Right cardiac atrium (tissue), 5 donors: ENCODE measurements at regions of chr2 and their contacts with region 1.

Region 1: DNA sequence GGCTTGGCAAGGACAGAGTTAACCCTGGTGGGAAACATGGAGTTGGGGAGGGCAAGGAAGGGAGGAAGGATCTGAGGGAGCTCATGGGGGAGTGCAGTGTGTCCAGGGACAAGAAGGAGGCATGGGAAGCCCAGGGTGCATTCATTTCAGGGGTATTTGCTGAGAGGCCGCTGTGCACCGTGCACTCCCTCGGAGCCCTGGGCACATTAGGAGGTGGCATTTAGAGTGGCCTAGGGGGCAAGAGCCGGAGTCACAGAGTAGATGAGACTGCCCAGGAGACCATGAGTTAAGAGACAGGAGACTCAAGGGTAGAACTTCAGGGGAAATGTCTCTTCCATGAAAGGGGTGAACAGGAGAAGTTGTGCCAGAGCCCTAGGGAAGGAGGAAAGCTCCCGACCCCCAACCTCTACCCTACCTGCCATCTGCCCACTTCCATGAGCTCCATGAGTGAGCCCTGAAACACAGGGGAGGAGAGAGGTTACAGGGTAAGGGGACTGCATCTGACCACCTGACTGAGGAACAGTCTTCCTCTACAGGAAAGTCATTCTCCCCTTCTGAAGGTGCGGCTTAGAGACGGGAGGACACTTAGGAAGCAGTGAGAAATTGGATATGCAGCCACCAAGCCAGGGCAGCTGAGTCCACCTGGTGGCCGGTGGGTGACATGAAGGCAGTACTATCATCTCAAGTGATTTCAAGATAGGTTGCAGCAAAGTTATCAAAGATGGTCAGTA is 58.5 kb upstream of the COPS8 start:
- DNase-seq: peak; percentile 75 to 89 (median 84)
- ATAC-seq: peak; percentile 77 to 93
- H3K4me3 ChIP-seq: no peak overlapping the region
- H3K27ac ChIP-seq: no peak overlapping the region
- H3K4me1 ChIP-seq: no peaks in the 10 kb centered on the region
- H3K27me3 ChIP-seq: no peaks in the 10 kb centered on the region

Region 2: DNA sequence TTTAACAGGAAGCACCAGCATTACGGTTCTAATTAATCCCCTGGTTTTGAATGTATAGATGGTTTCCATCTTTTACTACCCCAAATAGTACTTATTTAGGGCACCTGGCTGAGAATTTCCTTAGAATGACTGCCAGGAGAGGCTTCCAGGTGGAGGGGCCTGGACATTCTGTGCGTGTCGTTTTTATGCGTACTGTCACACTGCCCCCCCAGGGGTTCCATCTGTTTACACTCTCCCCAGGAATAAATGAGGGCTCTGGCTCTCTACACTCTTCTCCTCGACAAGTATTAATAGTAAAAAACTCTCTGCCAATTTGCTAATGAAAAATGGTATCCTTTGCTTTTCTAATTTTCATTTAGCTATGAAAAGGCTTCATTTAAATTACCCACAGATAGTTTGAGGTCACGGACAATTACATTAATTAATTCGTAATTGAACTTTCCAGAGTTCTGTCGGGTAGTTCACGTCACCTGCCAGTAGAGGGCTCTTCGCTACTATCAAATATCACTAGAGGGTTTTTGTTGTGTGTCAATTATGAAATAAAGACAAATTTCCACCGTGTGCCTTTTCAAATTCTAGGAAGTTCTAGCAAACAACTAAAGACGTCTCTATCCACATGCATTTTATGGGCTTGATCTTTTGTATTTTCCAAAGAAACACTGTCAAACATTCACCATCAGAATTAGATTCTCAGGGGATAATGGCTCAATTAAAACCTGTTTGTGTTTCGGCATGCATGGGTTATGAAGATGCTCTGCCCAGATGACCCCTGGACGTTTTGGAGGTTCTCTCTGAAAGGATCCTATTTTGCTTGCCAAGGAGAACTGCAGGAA is 674.2 kb before region 1 on chr2:
- intact Hi-C with region 1: loop called in 2 of 4 experiments (anchors 2 to 10 kb)
- DNase-seq: no peak
- ATAC-seq: peak in 1 of 2 donors; percentile 32
- H3K4me3 ChIP-seq: no peak overlapping the region
- H3K27ac ChIP-seq: no peak overlapping the region
- H3K4me1 ChIP-seq: no peaks in the 10 kb centered on the region
- H3K27me3 ChIP-seq: no peaks in the 10 kb centered on the region

Region 3: DNA sequence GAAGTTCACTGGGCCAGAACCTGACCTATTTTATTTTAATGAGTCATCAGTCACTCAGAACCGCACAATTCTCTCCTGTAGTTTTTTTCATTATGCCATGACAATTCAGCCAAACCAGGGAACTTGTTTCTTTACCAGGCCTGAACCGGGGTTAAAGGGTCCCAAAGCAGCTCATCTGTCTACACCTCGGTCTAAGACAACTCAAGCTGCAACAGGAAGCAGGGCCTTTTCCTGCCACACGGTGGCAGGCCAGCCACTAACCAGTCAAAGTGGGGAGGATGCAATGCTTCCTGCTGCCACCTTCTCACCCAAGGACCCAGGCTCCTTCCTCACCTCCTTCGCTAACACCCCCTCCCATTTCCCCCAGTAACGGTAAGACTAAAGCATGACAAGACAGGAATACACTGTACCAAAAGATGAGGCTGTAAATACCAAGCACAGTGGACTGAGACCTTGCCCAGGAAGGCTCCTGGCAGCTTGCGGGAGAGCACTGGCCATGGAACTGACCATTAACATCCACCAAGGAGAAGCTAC is 514.2 kb before region 1 on chr2:
- intact Hi-C with region 1: loop called (anchors 5 to 10 kb)
- DNase-seq: peak; percentile 64 to 89 (median 80)
- ATAC-seq: peak; percentile 86 to 95
- H3K4me3 ChIP-seq: no peak overlapping the region
- H3K27ac ChIP-seq: no peak overlapping the region
- H3K4me1 ChIP-seq: no peaks in the 10 kb centered on the region
- H3K27me3 ChIP-seq: no peaks in the 10 kb centered on the region

Region 4: GRCh38 chr2:236562434-236562833 is 464.7 kb before region 1 on chr2:
- intact Hi-C with region 1: loop called in 1 of 4 experiments (anchors 5 kb)
- DNase-seq: no peak
- ATAC-seq: no peak
- H3K4me3 ChIP-seq: no peak overlapping the region
- H3K27ac ChIP-seq: no peak overlapping the region
- H3K4me1 ChIP-seq: peaks cover 2% of the 10 kb centered on the region
- H3K27me3 ChIP-seq: no peaks in the 10 kb centered on the region

Region 5: DNA sequence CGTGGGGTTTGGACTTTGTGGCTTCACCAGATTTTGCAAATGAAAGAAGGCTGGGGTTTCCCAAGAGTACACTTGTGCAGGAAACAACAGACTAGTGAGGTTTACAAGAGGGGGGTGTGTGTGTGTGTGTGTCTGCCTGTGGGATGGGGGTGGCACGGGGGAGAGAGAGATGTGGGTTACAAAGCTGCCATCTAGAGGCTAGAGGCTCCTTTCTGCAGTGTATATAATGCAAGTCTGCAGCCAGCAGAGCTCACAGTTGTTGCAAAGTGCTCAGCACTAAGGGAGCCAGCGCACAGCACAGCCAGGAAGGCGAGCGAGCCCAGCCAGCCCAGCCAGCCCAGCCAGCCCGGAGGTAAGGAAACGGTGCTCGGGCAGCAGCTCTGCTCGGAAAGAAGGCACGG is 457.6 kb before region 1 on chr2 and contains the start of gene ACKR3:
- intact Hi-C with region 1: loop called in 2 of 4 experiments (anchors 5 kb)
- DNase-seq: peak; percentile 82 to 91 (median 90)
- ATAC-seq: peak; percentile 81 to 88
- H3K4me3 ChIP-seq: peak within 1 kb of the TSS; percentile 79
- H3K27ac ChIP-seq: peak within 1 kb of the TSS; percentile 97
- H3K4me1 ChIP-seq: peaks cover 2% of the 10 kb centered on the region
- H3K27me3 ChIP-seq: no peaks in the 10 kb centered on the region
- total RNA-seq, gene ACKR3: 27.4 to 50.1 (median 33.8) TPM

Region 6: DNA sequence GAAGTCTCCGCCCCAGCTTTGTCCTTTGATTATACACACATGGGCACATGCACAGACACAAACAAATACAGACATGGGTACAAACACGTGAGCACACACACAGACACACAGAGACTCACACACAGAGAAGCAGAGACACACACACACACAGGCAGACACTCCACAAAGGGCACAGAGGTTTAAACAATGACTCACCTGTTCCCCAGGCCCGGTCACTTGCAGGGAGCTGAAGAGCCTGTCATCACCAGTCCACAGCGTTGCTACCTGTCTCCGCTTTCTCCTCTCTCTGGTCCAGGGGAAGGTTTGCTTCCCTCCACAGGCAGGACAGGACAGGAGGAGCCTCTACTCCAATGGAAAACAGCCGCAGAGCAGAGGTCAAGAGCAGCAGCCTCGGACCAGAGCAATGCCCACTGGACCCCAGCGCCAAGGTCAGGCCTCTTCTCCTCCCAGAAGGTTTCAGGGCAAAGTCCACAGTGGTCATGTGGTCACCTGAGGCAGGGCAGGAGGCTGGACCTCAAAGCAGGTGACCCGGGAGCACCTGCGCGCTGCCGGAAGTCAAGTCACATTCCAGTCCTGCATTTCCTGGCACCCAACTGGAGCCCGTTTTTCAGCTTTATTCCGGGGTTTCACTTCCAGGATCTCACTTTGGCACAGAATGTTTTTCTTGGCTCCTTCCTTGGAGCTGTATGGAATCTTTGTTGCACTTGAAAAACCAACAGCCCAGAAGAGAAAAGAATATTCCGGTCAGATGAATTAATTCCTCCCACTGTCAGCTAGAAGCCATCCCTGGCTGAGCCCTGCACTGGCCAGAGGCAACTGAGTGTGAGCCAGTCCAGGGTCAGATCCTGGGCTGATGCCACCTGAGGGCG is 563.4 kb after region 1 on chr2 and contains the start of gene RAB17:
- intact Hi-C with region 1: no loop called
- DNase-seq: peak in 1 of 3 donors; percentile 65
- ATAC-seq: peak in 1 of 2 donors; percentile 13
- H3K4me3 ChIP-seq: no peak within 1 kb of the TSS
- H3K27ac ChIP-seq: no peak within 1 kb of the TSS
- H3K4me1 ChIP-seq: peaks cover 7% of the 10 kb centered on the region
- H3K27me3 ChIP-seq: no peaks in the 10 kb centered on the region
- total RNA-seq, gene RAB17: 0.74 to 2.8 (median 1.9) TPM